ENCODE measurements at regions of chr15 and their contacts with region 1.

Region 1: GRCh38 chr15:90557186-90558084 is 27.7 kb downstream of the CRTC3 start:
- DNase-seq: peak; percentile 84 to 96 (median 92)
- ATAC-seq: peak; percentile 74 to 86 (median 82)
- H3K4me3 ChIP-seq: peak overlapping the region in 1 of 3 donors; percentile 19
- H3K27ac ChIP-seq: peak overlapping the region; percentile 72 to 93 (median 88)
- H3K4me1 ChIP-seq: peaks cover 3 to 77% (median 34%) of the 10 kb centered on the region in 4 donors
- H3K27me3 ChIP-seq: no peaks in the 10 kb centered on the region
- CTCF ChIP-seq: no peak
- POLR2A ChIP-seq: peak; percentile 1

Region 2: DNA sequence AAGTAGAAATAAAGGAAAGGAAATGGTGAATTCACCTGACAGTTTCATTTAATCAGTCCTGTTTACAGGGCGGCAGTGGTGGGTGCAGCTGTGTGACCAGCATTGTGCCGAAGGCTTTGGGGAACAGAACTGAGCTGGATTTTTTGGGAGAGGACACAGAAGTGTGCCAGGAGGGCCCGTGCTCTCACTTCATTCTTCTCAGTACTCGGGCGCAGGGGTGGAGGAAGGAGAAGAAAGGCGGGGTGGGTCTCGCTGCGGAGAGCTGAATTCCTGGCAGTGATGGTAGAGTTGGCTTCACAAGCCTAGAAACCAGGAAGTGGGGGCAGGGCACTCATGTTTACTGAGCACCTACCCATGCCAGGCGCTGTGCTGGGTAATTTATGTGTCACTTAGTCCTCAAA is 36.9 kb after region 1 on chr15:
- intact Hi-C with region 1: loop called in 1 of 2 experiments (anchors 5 kb)
- DNase-seq: peak; percentile 83 to 90 (median 86)
- ATAC-seq: peak; percentile 83 to 86 (median 84)
- H3K4me3 ChIP-seq: peak overlapping the region in 2 of 3 donors; percentile 31 to 44
- H3K27ac ChIP-seq: peak overlapping the region; percentile 62 to 78 (median 78)
- H3K4me1 ChIP-seq: peaks cover 0 to 63% (median 29%) of the 10 kb centered on the region in 4 donors
- H3K27me3 ChIP-seq: no peaks in the 10 kb centered on the region
- CTCF ChIP-seq: no peak
- POLR2A ChIP-seq: peak; percentile 38

Region 3: DNA sequence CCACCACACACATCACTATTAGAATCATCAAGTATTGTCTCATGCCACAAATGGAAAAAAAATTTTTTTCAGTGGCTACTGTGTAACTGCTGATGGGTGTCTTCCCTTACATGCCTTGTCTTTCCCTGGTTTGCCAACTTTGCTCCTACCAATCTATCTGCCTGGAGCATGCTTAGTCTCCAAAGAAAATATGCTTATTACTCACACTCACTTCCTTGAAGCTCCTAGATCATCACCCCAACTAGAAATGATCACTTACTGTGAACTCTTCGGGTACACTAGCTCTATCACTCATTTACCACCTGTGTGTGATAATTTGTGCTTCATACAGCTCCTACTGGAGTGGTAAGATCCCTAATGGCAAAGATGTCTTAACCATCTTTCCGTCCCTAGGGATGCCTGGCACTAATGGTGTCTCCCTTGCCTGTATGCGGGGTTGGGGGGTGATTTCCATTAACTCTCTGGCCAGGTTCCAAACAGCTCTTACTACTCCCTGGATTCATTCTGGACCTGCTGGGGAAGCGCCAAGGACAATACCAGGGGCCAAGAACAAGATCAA is 464.2 kb after region 1 on chr15:
- intact Hi-C with region 1: no loop called
- DNase-seq: no peak
- ATAC-seq: peak in 1 of 4 donors; percentile 4
- H3K4me3 ChIP-seq: peak overlapping the region; percentile 78 to 99 (median 90)
- H3K27ac ChIP-seq: peak overlapping the region in 1 of 3 donors; percentile 44
- H3K4me1 ChIP-seq: peaks cover 0 to 15% (median 5%) of the 10 kb centered on the region in 4 donors
- H3K27me3 ChIP-seq: no peaks in the 10 kb centered on the region
- CTCF ChIP-seq: no peak
- POLR2A ChIP-seq: no peak